Activated CD4-positive, alpha-beta memory T cell treated with anti-CD3 and anti-CD28 coated beads for 36 hours (primary cell): ENCODE measurements at regions of chr1 and their contacts with region 1.

Region 1: GRCh38 chr1:239308701-239309333 is 77.6 kb upstream of the CHRM3 start:
- DNase-seq: peak; percentile 34
- H3K4me3 Mint-ChIP-seq: no peak overlapping the region
- H3K27ac Mint-ChIP-seq: no peak overlapping the region
- H3K4me1 Mint-ChIP-seq: no peaks in the 10 kb centered on the region
- H3K27me3 Mint-ChIP-seq: peaks cover 2% of the 10 kb centered on the region

Region 2: GRCh38 chr1:239898062-239898730 is 589.4 kb after region 1 on chr1:
- CTCF ChIA-PET with region 1: interaction called, 5 read pairs
- POLR2A ChIA-PET with region 1: no interaction called
- intact Hi-C with region 1: loop called (anchors 2 kb)
- DNase-seq: peak; percentile 81
- H3K4me3 Mint-ChIP-seq: no peak overlapping the region
- H3K27ac Mint-ChIP-seq: no peak overlapping the region
- H3K4me1 Mint-ChIP-seq: peaks cover 2% of the 10 kb centered on the region
- H3K27me3 Mint-ChIP-seq: peaks cover 6% of the 10 kb centered on the region